Sigmoid colon (tissue), 7 donors: ENCODE measurements at regions of chr1 and their contacts with region 1.

Region 1: DNA sequence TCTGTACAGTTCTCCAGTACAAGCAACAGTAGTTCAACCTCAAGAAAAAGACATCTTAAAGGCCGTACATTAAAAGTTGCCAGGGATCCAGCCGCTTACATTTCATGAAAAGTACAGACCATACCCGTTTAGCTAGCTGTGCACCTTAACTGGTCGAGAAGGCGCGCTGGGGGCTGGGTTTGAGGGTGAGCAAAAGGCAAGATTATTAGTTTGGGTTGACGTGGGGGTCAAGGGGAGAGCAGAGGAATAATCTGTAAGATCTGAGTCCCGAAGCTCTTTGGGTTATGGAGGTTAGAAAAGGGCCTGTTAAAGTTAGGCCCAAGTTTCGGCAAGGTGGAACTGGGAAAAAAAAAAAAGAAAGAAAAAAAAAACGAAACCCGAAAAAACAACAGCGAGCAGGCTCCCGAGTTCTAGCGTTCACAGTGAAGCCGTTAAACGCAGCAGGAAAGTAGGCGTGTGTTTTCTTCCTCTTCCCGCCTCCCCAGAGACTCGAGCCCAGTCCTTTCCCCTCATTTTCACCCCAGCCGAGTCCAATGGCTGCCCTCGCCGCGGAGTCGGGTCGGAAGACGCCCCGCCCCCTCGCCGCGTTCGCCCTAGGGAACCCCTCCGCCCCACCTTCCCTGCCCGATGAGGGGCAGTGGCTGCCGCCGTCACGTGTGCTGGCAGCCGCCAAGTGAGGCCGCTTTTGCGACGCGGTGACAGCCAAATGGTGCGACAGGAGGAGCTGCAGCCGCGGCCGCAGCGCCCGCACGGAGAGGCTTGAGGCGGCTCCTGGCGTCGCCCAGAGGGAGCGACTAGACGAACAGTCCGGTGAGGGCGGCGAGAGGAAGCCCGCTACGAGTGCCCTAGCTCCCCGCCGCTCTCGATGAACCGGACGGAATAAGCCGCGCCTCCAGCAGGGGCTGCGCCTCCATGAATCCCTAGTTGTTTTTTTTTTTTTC is at the start of gene PKN2:
- DNase-seq: peak; percentile 98
- H3K4me3 ChIP-seq: peak within 1 kb of the TSS; percentile 77 to 95 (median 92)
- H3K27ac ChIP-seq: peak within 1 kb of the TSS; percentile 91 to 97 (median 96)
- H3K4me1 ChIP-seq: peaks cover 0 to 38% (median 18%) of the 10 kb centered on the region in 4 donors
- H3K27me3 ChIP-seq: no peaks in the 10 kb centered on the region
- CTCF ChIP-seq: peak in 3 of 4 experiments; percentile 14 to 30 (median 17)
- EP300 ChIP-seq: peak in 2 of 4 donors; percentile 21 to 53
- POLR2A ChIP-seq: peak; percentile 70 to 77
- total RNA-seq, gene PKN2: 25.5 to 43.4 (median 37.1) TPM

Region 2: DNA sequence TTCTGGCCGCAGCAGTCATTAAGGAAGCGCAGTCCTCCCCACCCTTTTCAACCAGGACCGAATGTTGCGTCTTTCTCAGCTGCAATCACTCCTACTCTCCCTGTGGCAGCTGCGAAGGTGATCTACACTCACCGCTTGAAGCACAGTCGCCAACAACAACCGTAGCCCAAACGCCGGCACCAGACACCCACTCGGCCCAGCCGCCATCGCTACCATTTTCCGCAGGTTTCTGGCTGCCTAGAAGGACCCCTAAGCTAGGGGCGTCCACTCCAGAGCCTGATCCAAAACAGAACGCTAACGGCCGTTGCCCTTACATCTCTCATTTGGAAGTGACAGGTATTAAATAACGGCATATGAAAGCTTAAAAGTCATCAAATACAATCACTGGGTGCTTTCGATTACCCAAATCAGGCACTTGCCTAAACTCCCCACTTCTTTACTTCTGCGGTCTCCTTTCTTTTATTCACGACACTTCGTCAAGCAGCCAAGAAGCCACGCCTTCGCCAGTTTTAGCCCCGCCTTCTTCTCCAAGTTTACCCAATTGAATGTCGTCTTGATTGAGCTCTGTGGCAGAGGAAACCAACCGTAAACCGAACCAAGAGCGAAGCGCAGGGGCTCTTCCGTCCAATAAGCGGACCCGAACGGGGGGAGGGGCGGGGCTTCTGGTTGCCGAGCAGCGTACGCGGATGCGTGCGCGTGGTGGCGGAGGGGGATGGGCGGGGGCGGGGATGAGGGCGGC is 1769.7 kb before region 1 on chr1 and contains the start of gene SELENOF:
- intact Hi-C with region 1: loop called (anchors 10 kb)
- DNase-seq: peak; percentile 99
- H3K4me3 ChIP-seq: peak within 1 kb of the TSS; percentile 78 to 98 (median 87)
- H3K27ac ChIP-seq: peak within 1 kb of the TSS; percentile 89 to 94 (median 91)
- H3K4me1 ChIP-seq: peaks cover 0 to 36% (median 19%) of the 10 kb centered on the region in 4 donors
- H3K27me3 ChIP-seq: no peaks in the 10 kb centered on the region
- CTCF ChIP-seq: no peak
- EP300 ChIP-seq: no peak
- POLR2A ChIP-seq: no peak
- total RNA-seq, gene SELENOF: 66.7 to 110 (median 84.1) TPM

Region 3: GRCh38 chr1:88581703-88582102 is 102.1 kb before region 1 on chr1:
- intact Hi-C with region 1: no loop called
- DNase-seq: no peak
- H3K4me3 ChIP-seq: no peak overlapping the region
- H3K27ac ChIP-seq: no peak overlapping the region
- H3K4me1 ChIP-seq: no peaks in the 10 kb centered on the region
- H3K27me3 ChIP-seq: no peaks in the 10 kb centered on the region
- CTCF ChIP-seq: no peak
- EP300 ChIP-seq: no peak
- POLR2A ChIP-seq: no peak

Region 4: DNA sequence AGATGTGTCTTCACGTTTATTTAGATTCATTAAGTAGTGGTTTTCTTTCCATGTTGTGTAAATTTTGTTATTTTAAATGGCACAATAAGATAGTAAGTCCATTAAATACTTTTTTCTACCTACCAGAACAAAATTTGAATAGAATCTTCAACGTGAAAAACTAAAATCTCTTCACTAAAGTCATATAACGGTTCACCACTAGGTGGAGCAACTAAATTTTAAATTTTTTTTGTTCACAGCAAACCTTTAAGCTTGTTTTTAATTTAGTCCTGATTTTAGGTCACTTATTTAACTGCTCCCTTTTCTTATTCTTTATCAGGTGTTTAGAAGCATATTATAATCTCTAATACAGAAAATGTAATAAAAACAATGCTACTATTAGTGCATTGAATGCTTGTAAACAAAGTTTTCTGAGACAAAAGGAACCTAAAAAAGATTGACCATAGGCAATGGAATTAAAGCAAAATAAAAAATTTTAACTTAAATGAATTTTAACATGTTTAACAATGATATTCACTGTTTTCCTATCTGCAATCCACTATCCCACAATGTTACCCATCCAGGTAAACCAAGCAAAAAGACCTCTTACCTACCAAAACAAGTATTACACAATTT is 28.0 kb before region 1 on chr1:
- intact Hi-C with region 1: loop called (anchors 2 kb)
- DNase-seq: no peak
- H3K4me3 ChIP-seq: no peak overlapping the region
- H3K27ac ChIP-seq: no peak overlapping the region
- H3K4me1 ChIP-seq: no peaks in the 10 kb centered on the region
- H3K27me3 ChIP-seq: no peaks in the 10 kb centered on the region
- CTCF ChIP-seq: peak; percentile 18 to 53 (median 42)
- EP300 ChIP-seq: no peak
- POLR2A ChIP-seq: no peak

Region 5: DNA sequence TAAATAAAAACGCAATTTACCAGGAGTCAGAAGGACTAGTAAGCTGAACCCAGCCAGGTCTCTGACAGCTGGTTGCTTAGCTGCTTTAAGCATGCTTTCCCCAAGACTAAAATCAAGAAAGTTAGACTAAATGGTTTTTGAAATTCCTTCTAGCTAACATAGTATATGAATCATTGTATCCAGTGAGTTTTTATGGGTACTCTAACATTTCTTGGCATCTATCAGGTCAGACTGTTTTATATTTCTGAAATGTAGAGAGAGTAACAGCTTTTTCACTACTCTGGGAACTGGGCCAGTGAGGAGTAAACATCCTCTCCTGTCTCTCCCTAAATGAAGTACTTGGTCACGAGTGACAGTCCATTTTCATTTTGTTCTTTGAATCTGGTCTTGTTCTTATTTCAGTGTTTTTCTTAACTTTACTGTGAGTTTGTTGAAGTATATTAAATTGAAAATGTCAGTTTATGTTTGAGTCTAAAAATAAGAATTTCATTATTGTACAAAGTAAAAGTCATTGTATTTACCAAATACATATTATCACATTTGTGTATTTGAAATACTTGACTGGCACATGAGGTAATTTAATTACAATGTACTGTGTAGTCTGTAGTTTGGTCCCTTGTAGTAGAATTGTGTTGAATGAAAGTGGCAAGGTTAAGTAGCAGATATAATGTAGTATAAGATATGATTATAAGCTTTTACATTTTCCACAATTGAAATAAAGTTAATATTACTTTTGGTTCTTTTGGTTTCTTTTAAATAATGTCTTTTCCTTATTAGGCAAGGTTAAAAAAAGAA is 47.9 kb after region 1 on chr1:
- intact Hi-C with region 1: loop called (anchors 5 kb)
- DNase-seq: peak; percentile 79
- H3K4me3 ChIP-seq: no peak overlapping the region
- H3K27ac ChIP-seq: peak overlapping the region; percentile 52 to 62 (median 60)
- H3K4me1 ChIP-seq: peaks cover 0 to 31% (median 18%) of the 10 kb centered on the region in 4 donors
- H3K27me3 ChIP-seq: no peaks in the 10 kb centered on the region
- CTCF ChIP-seq: no peak
- EP300 ChIP-seq: peak in 1 of 4 donors; percentile 39
- POLR2A ChIP-seq: no peak

Region 6: GRCh38 chr1:88891318-88891950 is 207.6 kb after region 1 on chr1 and contains the start of gene GTF2B:
- intact Hi-C with region 1: loop called (anchors 5 kb)
- DNase-seq: peak; percentile 97
- H3K4me3 ChIP-seq: peak within 1 kb of the TSS; percentile 81 to 100 (median 86)
- H3K27ac ChIP-seq: peak within 1 kb of the TSS; percentile 94 to 98 (median 96)
- H3K4me1 ChIP-seq: peaks cover 0 to 29% (median 21%) of the 10 kb centered on the region in 4 donors
- H3K27me3 ChIP-seq: no peaks in the 10 kb centered on the region
- CTCF ChIP-seq: no peak
- EP300 ChIP-seq: peak in 2 of 4 donors; percentile 64 to 83
- POLR2A ChIP-seq: peak; percentile 89 to 92
- total RNA-seq, gene GTF2B: 21.6 to 42.6 (median 31.3) TPM